Breast epithelium (tissue), 4 donors: ENCODE measurements at regions of chr17 and their contacts with region 1.

Region 1: DNA sequence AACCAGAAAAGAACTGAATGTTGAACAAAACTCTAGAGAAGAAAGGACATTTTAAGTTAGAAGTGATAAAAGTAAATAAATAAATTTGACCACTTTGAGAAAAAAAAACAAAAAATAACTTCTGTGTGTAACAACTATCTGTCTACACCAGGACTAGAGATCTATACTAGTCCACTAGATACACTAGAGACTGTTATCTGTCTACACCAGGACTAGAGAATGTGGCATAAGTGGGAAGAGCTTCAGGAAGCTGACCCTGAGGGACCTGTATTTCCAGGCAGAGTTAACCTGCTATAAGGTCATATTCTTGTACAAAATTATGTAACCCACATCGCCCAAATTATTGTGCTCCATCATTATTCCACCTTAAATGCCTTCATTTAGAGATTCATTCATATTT is 160.8 kb downstream of the SKAP1 start:
- DNase-seq: no peak
- H3K4me3 ChIP-seq: no peak overlapping the region
- H3K27ac ChIP-seq: no peak overlapping the region
- H3K4me1 ChIP-seq: no peaks in the 10 kb centered on the region
- H3K27me3 ChIP-seq: no peaks in the 10 kb centered on the region
- CTCF ChIP-seq: no peak
- POLR2A ChIP-seq: no peak

Region 2: DNA sequence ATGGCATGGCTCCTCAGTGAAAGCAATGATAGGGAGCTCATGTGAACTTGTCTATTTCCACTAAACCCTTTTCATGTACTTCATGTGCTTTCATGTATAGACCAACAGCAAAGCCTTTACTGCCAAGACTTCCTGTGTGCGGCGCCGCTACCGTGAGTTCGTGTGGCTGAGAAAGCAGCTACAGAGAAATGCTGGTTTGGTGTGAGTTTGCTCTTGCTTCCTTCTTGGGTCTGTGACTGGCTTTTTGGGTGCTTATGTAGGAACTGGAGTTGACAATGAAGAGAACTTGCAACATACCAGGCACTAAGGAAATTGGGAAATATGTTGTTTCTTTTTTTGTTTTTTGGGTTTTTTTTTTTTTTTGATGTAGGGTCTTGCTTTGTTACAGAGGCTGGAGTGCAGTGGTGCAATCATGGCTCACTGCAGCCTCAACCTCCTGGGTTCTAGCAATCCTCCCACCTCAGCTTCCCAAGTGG is 156.0 kb before region 1 on chr17:
- intact Hi-C with region 1: no loop called
- DNase-seq: no peak
- H3K4me3 ChIP-seq: no peak overlapping the region
- H3K27ac ChIP-seq: no peak overlapping the region
- H3K4me1 ChIP-seq: no peaks in the 10 kb centered on the region
- H3K27me3 ChIP-seq: no peaks in the 10 kb centered on the region
- CTCF ChIP-seq: no peak
- POLR2A ChIP-seq: no peak

Region 3: GRCh38 chr17:48293319-48294019 is 24.3 kb after region 1 on chr17:
- intact Hi-C with region 1: loop called (anchors 2 kb)
- DNase-seq: no peak
- H3K4me3 ChIP-seq: no peak overlapping the region
- H3K27ac ChIP-seq: no peak overlapping the region
- H3K4me1 ChIP-seq: no peaks in the 10 kb centered on the region
- H3K27me3 ChIP-seq: peaks cover 0 to 18% of the 10 kb centered on the region in 2 donors
- CTCF ChIP-seq: no peak
- POLR2A ChIP-seq: no peak

Region 4: GRCh38 chr17:48322060-48322459 is 52.9 kb after region 1 on chr17:
- intact Hi-C with region 1: no loop called
- DNase-seq: no peak
- H3K4me3 ChIP-seq: no peak overlapping the region
- H3K27ac ChIP-seq: no peak overlapping the region
- H3K4me1 ChIP-seq: no peaks in the 10 kb centered on the region
- H3K27me3 ChIP-seq: peaks cover 0 to 11% of the 10 kb centered on the region in 2 donors
- CTCF ChIP-seq: no peak
- POLR2A ChIP-seq: no peak